Activated T-helper 1 cell treated with anti-CD3 and anti-CD28 coated beads, Interleukin-12 subunit alpha, Interleukin-12 subunit beta, Interleukin-2, Interleukin-4 antibody, amounts not matched to agents 30 ng/mL and 10 ng/mL and 1 ng/mL, durations not matched to agents 14 hours and 24 hours and 36 hours (primary cell): ENCODE measurements at regions of chr19 and their contacts with region 1.

Region 1: DNA sequence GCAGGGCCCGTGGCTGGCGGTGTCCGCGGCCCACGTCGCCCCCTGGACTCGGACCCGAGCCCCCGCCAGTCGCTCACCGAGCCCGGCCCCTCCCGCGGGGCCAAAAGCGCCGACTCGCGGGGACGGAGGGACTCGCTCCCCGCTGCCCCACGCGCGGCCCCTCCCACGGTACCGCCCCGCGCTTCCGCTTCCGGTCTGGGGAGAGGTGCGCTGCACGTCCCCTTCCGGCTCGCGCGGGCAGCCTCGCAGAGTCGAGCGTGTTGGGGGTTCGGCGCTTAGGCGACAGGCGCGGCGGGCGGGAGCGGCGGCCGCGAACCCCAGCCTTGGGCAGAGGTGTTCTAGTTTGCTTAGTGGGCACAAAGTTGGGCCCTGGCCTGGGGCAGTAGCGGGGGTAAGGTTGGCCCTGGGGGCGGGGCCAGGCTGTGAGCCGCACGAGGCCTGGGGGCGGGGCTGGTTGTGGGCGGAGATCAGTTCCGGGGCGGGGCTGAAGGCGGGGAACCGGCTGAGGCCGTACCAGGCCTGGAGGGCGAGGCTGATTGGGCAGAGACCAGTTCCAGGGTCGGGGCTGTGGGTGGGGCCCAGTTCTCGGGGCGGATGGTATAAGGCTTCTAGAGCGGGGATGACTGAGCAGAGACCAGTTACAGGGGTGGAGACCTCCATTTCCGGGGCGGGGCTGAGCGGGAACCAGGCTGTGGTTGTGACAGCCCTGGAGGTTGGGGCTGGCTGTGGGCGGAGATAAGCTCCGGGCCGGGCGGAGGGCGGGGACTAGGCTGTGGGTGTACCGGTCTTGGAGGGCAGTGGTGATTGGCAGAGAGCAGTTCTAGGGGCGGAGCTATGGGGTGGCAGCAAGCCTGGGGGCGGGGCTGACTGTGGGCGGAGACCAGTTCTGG is at the starts of genes MBD3L1 and ZNF558:
- DNase-seq: peak; percentile 98
- H3K4me3 Mint-ChIP-seq: peak within 1 kb of the TSS; percentile 84
- H3K27ac Mint-ChIP-seq: peak within 1 kb of the TSS; percentile 95
- H3K4me1 Mint-ChIP-seq: peaks cover 20% of the 10 kb centered on the region
- H3K27me3 Mint-ChIP-seq: no peaks in the 10 kb centered on the region
- total RNA-seq, gene MBD3L1: not detected in 2 replicates
- total RNA-seq, gene ZNF558: 18.7 and 23.2 TPM in 2 replicates

Region 2: DNA sequence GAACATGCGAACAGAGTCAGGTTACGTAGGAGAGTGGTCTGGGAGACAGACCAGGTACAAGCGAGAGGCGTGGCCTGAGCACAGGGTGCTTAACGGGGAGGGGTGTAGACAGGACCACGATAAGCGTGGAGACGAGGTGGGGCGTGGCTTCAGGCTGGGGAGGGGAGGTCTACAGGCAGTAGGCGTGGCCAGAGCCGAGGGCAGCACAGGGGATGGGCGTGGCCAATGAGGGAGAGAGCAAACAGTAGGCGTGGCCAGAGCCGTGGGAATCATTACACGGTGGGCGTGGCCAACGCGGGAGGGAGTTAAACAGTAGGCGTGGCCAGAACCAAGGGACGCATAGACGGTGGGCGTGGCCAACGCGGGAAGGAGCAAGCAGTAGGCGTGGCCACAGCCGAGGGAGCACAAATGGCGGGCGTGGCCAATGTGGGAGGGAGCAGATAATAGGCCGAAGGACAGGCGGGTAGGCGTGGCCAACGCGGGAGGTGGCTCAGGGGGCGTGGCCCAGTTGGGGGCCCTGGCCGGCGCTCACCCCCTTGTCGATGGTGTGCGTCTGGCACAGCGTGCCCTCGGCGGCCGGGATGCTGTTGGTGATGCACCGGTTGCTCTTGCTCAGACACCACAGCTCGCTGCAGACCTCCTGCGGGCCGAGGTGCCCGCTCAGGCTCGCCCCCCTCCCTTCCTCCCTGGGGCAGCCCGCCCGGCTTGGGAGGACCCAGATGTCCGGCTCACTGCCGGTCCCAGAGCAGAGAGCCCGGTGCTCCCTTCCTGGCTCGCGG is 240.0 kb before region 1 on chr19:
- intact Hi-C with region 1: loop called (anchors 1 kb)
- DNase-seq: peak; percentile 80
- H3K4me3 Mint-ChIP-seq: peak overlapping the region; percentile 68
- H3K27ac Mint-ChIP-seq: peak overlapping the region; percentile 24
- H3K4me1 Mint-ChIP-seq: peaks cover 8% of the 10 kb centered on the region
- H3K27me3 Mint-ChIP-seq: peaks cover 12% of the 10 kb centered on the region

Region 3: DNA sequence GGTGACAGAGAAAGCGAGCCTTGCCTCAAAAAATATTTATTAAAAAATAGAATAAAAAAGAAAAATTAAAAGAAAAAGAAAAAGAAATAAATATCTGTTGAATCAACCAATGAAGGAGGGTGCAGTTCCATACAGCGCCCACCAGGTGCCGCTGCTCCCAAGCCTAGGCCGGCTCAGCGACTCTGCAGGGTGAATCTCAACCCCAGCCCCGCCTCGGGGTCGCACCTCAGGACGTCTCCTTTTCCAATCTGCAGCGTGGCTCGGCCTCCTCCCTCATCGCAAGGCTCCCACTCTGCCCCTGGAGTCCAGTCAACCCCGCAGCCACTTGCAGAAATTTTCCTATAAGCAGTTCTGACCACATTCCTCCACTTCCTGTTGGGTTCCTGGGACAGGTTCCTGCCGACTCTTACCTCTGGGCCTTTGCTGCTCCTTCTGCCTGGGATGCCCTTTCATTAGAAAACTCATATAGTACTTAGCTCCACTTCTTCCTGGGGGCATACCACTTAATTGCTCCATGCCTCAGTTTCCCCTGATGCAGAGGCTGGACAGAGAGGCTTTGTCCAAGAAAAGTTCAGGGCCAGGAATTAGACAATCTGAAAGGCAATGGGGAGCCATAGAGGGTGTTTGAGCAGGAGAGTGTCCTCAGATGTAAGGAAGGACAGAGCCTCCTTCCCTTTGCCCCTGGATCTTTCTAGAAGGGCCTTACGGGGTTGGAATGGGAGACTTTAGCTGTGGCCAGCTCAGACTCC is 177.6 kb before region 1 on chr19:
- intact Hi-C with region 1: loop called (anchors 2 kb)
- DNase-seq: peak; percentile 39
- H3K4me3 Mint-ChIP-seq: peak overlapping the region; percentile 56
- H3K27ac Mint-ChIP-seq: no peak overlapping the region
- H3K4me1 Mint-ChIP-seq: peaks cover 5% of the 10 kb centered on the region
- H3K27me3 Mint-ChIP-seq: peaks cover 8% of the 10 kb centered on the region

Region 4: GRCh38 chr19:9645472-9645871 is 813.1 kb after region 1 on chr19:
- intact Hi-C with region 1: no loop called
- DNase-seq: no peak
- H3K4me3 Mint-ChIP-seq: no peak overlapping the region
- H3K27ac Mint-ChIP-seq: no peak overlapping the region
- H3K4me1 Mint-ChIP-seq: no peaks in the 10 kb centered on the region
- H3K27me3 Mint-ChIP-seq: no peaks in the 10 kb centered on the region